Common myeloid progenitor, CD34-positive (primary cell): ENCODE measurements at regions of chr1 and their contacts with region 1.

Region 1: GRCh38 chr1:39816415-39817090 is 27.9 kb upstream of the BMP8B start:
- DNase-seq: peak; percentile 65 to 83 (median 77)
- H3K4me3 ChIP-seq: peak overlapping the region in 1 of 7 experiments; percentile 16
- H3K27ac ChIP-seq: no peak overlapping the region
- H3K4me1 ChIP-seq: peaks cover 0 to 8% (median 4%) of the 10 kb centered on the region in 4 experiments
- H3K27me3 ChIP-seq: peaks cover 0 to 2% (median 0%) of the 10 kb centered on the region in 5 experiments

Region 2: GRCh38 chr1:39973503-39974135 is 157.1 kb after region 1 on chr1:
- CTCF ChIA-PET with region 1: interaction called, 74 read pairs
- POLR2A ChIA-PET with region 1: no interaction called
- DNase-seq: peak; percentile 56 to 77 (median 69)
- H3K4me3 ChIP-seq: peak overlapping the region in 1 of 7 experiments; percentile 12
- H3K27ac ChIP-seq: no peak overlapping the region
- H3K4me1 ChIP-seq: peaks cover 0 to 2% (median 0%) of the 10 kb centered on the region in 4 experiments
- H3K27me3 ChIP-seq: no peaks in the 10 kb centered on the region